ENCODE measurements at regions of chr3 and their contacts with region 1.

Region 1: GRCh38 chr3:141360888-141361598 is 7.3 kb upstream of the ZBTB38 start:
- DNase-seq: peak; percentile 70
- H3K4me3 ChIP-seq: peak overlapping the region in 1 of 2 experiments; percentile 36; a peak in 1 of 4 replicates
- H3K27ac ChIP-seq: peak overlapping the region; percentile 53 to 61; a peak in 3 of 4 replicates
- H3K4me1 ChIP-seq: peaks cover 2 to 17% of the 10 kb centered on the region in 2 experiments; a peak in 2 of 4 replicates
- H3K27me3 ChIP-seq: no peaks in the 10 kb centered on the region
- CTCF ChIP-seq: peak; percentile 86
- EP300 ChIP-seq: peak in 1 of 2 experiments; percentile 63; a peak in 2 of 4 replicates
- RAD21 ChIP-seq: peak; percentile 93

Region 2: GRCh38 chr3:141311496-141312353 is 49.3 kb before region 1 on chr3:
- CTCF ChIA-PET with region 1: interaction called, 27 read pairs
- POLR2A ChIA-PET with region 1: interaction called, 3 read pairs
- DNase-seq: peak; percentile 91
- H3K4me3 ChIP-seq: peak overlapping the region; percentile 73 to 77
- H3K27ac ChIP-seq: peak overlapping the region; percentile 44 to 82; a peak in 3 of 4 replicates
- H3K4me1 ChIP-seq: peaks cover 0 to 15% of the 10 kb centered on the region in 2 experiments; a peak in 2 of 4 replicates
- H3K27me3 ChIP-seq: no peaks in the 10 kb centered on the region
- CTCF ChIP-seq: peak; percentile 76
- EP300 ChIP-seq: 0 out of 4 replicates have a peak, but pooled peaks of 1 of the 2 experiments have one; percentile 26
- RAD21 ChIP-seq: peak; percentile 83

Region 3: DNA sequence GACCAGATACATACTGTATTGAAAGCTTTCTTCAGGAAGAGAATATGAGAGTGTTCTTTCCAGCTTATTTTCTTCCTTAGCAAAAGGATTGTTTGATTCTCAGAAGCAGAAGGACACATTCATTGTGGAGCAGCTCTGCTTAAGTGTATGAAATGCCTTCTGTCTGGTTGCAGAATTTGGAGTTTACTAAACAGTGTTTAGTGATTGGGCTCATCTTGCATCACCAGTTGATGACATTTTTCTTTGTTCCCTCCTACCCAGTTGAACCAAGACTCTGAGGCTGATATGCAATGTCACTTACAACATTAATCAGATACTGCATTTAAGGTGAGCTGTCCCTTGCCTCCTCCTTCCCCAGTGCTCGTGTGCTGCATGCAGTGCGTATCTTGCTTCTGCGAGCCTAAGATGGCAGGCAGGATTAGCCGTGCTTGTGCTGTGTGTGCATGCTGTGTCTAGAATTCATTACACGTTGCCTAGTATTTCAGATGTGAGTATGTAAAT is 25.6 kb after region 1 on chr3:
- CTCF ChIA-PET with region 1: interaction called, 42 read pairs
- POLR2A ChIA-PET with region 1: no interaction called
- DNase-seq: no peak
- H3K4me3 ChIP-seq: peak overlapping the region; percentile 19 to 45; a peak in 3 of 4 replicates
- H3K27ac ChIP-seq: peak overlapping the region; percentile 11 to 94; a peak in 3 of 4 replicates
- H3K4me1 ChIP-seq: peaks cover 7 to 19% of the 10 kb centered on the region in 2 experiments; a peak in 3 of 4 replicates
- H3K27me3 ChIP-seq: no peaks in the 10 kb centered on the region
- CTCF ChIP-seq: no peak
- EP300 ChIP-seq: no peak
- RAD21 ChIP-seq: 0 out of 2 replicates have a peak, but pooled peaks have one; percentile 9

Region 4: DNA sequence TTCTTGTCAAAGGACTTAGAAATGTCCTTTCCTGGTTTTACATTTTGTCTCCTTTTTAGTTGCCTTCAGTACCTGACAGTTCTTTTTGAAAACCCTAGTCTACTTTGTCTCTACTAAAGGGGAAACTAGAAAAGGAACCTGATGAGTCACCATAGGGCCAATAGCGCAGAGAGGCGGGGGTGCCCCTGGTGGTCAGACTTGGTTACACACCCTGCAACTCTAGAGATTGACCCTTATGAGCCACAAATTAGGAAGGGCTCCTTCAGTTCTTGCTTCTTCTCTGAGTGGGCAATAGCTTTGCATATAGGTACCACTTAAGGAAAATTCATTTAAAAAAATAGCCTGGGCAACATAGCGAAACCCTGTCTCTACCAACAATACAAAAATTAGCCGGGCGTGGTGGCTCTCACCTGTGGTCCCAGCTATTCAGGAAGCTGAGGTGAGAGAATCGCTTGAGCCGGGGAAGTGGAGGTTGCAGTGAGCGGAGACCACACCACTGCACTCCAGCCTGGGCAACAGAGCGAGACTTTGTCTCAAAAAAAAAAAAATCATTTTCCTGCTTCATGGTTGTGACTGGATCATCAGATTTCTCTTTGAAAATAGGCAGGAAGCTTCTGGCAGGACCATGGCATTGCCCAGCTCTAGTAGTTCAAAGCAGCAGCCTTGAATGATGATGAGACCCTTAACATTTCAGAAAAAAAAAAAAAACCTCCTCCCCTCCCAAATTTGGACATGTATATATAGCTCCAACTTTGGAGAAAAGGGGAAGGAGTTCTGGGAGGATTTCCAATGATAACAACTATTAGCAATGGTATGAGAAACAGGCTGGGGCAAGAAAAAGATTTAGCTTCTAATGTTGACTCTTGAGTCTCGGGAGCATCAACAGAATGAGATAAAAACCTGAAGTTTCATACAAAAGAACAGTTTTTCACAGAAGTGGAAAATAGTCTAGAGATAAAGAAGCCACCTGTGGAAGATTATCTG is 80.6 kb after region 1 on chr3:
- CTCF ChIA-PET with region 1: interaction called, 23 read pairs
- POLR2A ChIA-PET with region 1: no interaction called
- DNase-seq: peak; percentile 69
- H3K4me3 ChIP-seq: no peak overlapping the region; a peak in 1 of 4 replicates
- H3K27ac ChIP-seq: peak overlapping the region in 1 of 2 experiments; percentile 51; a peak in 3 of 4 replicates
- H3K4me1 ChIP-seq: peaks cover 0 to 9% of the 10 kb centered on the region in 2 experiments; a peak in 2 of 4 replicates
- H3K27me3 ChIP-seq: no peaks in the 10 kb centered on the region
- CTCF ChIP-seq: peak; percentile 95
- EP300 ChIP-seq: no peak
- RAD21 ChIP-seq: peak; percentile 63

Region 5: DNA sequence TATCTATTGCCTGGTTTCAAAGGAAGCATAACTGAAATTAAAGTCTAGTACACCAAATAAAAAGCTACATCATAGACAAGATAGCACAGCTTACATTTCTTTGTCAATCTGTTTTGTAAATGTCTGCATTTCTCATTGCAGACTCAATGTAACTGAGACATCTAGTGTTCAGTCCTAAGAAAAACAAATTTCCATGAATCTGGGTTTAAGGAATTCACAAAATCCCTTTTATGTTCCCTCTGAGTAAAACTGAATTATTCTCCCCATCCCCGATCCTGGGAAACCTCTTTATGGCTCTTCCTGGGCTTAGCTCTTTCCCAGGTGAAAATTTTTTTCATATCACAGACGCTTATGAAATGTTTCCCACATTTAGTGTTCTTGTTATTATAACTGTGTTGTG is 104.2 kb after region 1 on chr3:
- CTCF ChIA-PET with region 1: interaction called, 48 read pairs
- POLR2A ChIA-PET with region 1: no interaction called
- DNase-seq: peak; percentile 24
- H3K4me3 ChIP-seq: no peak overlapping the region
- H3K27ac ChIP-seq: no peak overlapping the region
- H3K4me1 ChIP-seq: no peaks in the 10 kb centered on the region
- H3K27me3 ChIP-seq: no peaks in the 10 kb centered on the region
- CTCF ChIP-seq: peak; percentile 44
- EP300 ChIP-seq: no peak
- RAD21 ChIP-seq: peak; percentile 65

Region 6: GRCh38 chr3:141538568-141539240 is 177.7 kb after region 1 on chr3:
- CTCF ChIA-PET with region 1: no interaction called
- POLR2A ChIA-PET with region 1: no interaction called
- DNase-seq: no peak
- H3K4me3 ChIP-seq: no peak overlapping the region
- H3K27ac ChIP-seq: no peak overlapping the region
- H3K4me1 ChIP-seq: peaks cover 0 to 9% of the 10 kb centered on the region in 2 experiments; a peak in 2 of 4 replicates
- H3K27me3 ChIP-seq: no peaks in the 10 kb centered on the region
- CTCF ChIP-seq: no peak
- EP300 ChIP-seq: no peak
- RAD21 ChIP-seq: no peak

Measured in SK-N-SH (cell line).